CD4-positive, alpha-beta T cell (primary cell): ENCODE measurements at regions of chrX and their contacts with region 1.

Region 1: GRCh38 chrX:42246814-42247213 is 323.5 kb upstream of the CASK start:
- DNase-seq: no peak
- ATAC-seq: no peak
- H3K4me3 ChIP-seq: no peak overlapping the region
- H3K4me3 Mint-ChIP-seq: no peak overlapping the region
- H3K27ac ChIP-seq: no peak overlapping the region
- H3K27ac Mint-ChIP-seq: no peak overlapping the region
- H3K4me1 ChIP-seq: no peaks in the 10 kb centered on the region
- H3K4me1 Mint-ChIP-seq: no peaks in the 10 kb centered on the region
- H3K27me3 ChIP-seq: no peaks in the 10 kb centered on the region
- H3K27me3 Mint-ChIP-seq: no peaks in the 10 kb centered on the region
- CTCF ChIP-seq: no peak

Region 2: DNA sequence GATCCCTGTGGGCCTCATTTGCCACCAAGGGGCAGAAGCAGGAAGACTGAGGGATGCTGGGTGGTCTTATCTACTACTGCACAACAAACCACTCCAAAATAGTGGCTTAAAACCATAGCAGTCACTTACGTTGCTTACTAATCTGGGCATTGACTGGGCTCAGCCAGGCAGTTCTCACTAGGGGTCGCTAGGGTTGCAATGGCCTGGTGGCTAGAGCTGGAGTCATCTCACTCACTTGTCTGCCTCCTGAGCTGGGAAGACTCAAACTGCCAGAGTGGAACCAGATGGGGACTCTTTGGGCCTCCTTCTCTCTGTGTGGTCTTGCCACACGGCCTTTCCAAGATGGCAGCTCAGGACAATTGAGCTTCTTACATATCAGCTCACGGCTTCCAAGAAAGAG is 1932.7 kb before region 1 on chrX:
- CTCF ChIA-PET with region 1: no interaction called
- POLR2A ChIA-PET with region 1: no interaction called
- intact Hi-C with region 1: loop called in 1 of 2 experiments (anchors 5 kb)
- DNase-seq: no peak
- ATAC-seq: no peak
- H3K4me3 ChIP-seq: no peak overlapping the region
- H3K4me3 Mint-ChIP-seq: no peak overlapping the region
- H3K27ac ChIP-seq: no peak overlapping the region
- H3K27ac Mint-ChIP-seq: no peak overlapping the region
- H3K4me1 ChIP-seq: no peaks in the 10 kb centered on the region
- H3K4me1 Mint-ChIP-seq: no peaks in the 10 kb centered on the region
- H3K27me3 ChIP-seq: no peaks in the 10 kb centered on the region
- H3K27me3 Mint-ChIP-seq: no peaks in the 10 kb centered on the region
- CTCF ChIP-seq: no peak

Region 3: DNA sequence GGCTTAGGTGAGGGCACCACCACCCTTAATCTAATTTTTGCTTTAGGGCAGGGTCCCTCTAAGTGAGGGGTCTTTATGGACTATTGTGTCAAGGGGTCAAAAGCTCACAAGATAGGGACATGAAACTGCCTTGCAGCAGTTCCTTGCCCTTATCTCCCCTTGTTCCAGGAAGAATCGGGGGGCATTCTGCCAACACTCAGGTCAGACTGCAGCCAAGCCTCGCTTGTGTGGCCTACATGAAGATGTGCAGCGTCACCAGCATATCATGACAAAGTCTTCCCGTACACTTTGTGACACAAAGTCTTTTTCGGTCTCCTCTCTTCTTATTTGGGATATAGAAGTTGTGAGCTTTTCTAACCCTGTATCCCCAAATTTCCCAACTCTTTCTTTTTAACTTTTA is 1179.1 kb before region 1 on chrX:
- CTCF ChIA-PET with region 1: no interaction called
- POLR2A ChIA-PET with region 1: no interaction called
- intact Hi-C with region 1: no loop called
- DNase-seq: no peak
- ATAC-seq: no peak
- H3K4me3 ChIP-seq: no peak overlapping the region
- H3K4me3 Mint-ChIP-seq: no peak overlapping the region
- H3K27ac ChIP-seq: no peak overlapping the region
- H3K27ac Mint-ChIP-seq: no peak overlapping the region
- H3K4me1 ChIP-seq: no peaks in the 10 kb centered on the region
- H3K4me1 Mint-ChIP-seq: no peaks in the 10 kb centered on the region
- H3K27me3 ChIP-seq: no peaks in the 10 kb centered on the region
- H3K27me3 Mint-ChIP-seq: no peaks in the 10 kb centered on the region
- CTCF ChIP-seq: no peak

Region 4: DNA sequence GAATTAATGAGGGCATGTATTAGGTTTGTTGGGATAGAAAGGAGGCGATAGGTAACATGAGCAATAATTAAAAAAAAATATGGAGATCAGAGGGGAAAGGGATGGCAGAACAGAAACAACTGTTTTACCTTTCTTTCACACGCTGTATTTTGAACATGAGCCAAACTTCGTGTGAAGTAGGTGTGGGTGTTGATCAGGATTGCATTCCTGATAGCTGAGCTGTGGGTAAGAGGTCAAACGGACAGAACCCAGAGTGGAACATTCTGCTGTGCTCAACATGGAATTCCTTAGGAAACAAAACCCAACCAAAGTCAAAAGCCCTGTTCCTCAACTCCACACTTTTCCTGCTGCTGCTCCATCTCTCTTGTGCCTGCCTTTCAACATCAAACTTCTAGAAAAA is 161.0 kb before region 1 on chrX:
- CTCF ChIA-PET with region 1: no interaction called
- POLR2A ChIA-PET with region 1: no interaction called
- intact Hi-C with region 1: no loop called
- DNase-seq: no peak
- ATAC-seq: no peak
- H3K4me3 ChIP-seq: no peak overlapping the region
- H3K4me3 Mint-ChIP-seq: no peak overlapping the region
- H3K27ac ChIP-seq: no peak overlapping the region
- H3K27ac Mint-ChIP-seq: no peak overlapping the region
- H3K4me1 ChIP-seq: no peaks in the 10 kb centered on the region
- H3K4me1 Mint-ChIP-seq: no peaks in the 10 kb centered on the region
- H3K27me3 ChIP-seq: no peaks in the 10 kb centered on the region
- H3K27me3 Mint-ChIP-seq: no peaks in the 10 kb centered on the region
- CTCF ChIP-seq: no peak

Region 5: DNA sequence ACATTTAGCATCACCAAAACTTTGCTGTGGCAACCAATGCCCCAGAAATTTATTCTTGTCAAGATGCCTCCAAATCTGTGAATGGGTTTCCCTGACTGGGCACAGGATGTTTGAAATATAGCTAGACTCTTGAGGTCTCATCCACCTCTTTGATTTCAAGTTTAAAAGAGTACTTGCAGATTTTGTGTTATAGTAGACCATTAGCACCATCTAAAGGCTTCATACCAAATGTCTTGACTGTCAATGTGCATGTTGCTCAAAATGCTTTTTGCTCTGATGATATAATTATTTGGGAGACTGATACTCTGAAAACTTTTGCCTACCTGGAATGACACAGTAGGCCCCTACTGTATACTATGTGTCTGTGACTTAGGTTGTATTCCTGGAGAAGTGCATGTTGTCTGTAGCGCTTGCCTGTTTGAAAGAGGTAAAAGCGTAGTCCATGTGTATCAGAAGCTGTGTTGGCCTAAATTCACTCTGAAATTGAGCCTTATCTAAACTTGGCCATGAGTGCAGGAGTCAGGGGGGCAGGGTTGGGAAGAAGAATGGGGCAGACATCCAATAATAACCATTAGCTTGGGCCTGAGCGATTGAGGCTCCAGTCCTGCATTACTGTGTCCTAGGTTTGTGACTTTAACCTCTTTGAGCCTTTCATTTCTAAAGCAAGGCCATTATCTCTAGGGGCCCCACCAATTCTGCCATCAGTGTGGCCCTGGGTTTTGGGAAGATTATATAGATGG is 1692.5 kb after region 1 on chrX:
- CTCF ChIA-PET with region 1: no interaction called
- POLR2A ChIA-PET with region 1: no interaction called
- intact Hi-C with region 1: no loop called
- DNase-seq: no peak
- ATAC-seq: no peak
- H3K4me3 ChIP-seq: no peak overlapping the region
- H3K4me3 Mint-ChIP-seq: no peak overlapping the region
- H3K27ac ChIP-seq: no peak overlapping the region
- H3K27ac Mint-ChIP-seq: no peak overlapping the region
- H3K4me1 ChIP-seq: no peaks in the 10 kb centered on the region
- H3K4me1 Mint-ChIP-seq: no peaks in the 10 kb centered on the region
- H3K27me3 ChIP-seq: no peaks in the 10 kb centered on the region
- H3K27me3 Mint-ChIP-seq: no peaks in the 10 kb centered on the region
- CTCF ChIP-seq: no peak